OCI-LY7 (cell line): ENCODE measurements at regions of chr12 and their contacts with region 1.

Region 1: GRCh38 chr12:50924439-50925341 is 27.7 kb upstream of the HIGD1C start:
- DNase-seq: peak; percentile 96
- H3K4me3 ChIP-seq: peak overlapping the region; percentile 82
- H3K27ac ChIP-seq: peak overlapping the region; percentile 99
- H3K4me1 ChIP-seq: peaks cover 65% of the 10 kb centered on the region
- CTCF ChIP-seq: no peak

Region 2: DNA sequence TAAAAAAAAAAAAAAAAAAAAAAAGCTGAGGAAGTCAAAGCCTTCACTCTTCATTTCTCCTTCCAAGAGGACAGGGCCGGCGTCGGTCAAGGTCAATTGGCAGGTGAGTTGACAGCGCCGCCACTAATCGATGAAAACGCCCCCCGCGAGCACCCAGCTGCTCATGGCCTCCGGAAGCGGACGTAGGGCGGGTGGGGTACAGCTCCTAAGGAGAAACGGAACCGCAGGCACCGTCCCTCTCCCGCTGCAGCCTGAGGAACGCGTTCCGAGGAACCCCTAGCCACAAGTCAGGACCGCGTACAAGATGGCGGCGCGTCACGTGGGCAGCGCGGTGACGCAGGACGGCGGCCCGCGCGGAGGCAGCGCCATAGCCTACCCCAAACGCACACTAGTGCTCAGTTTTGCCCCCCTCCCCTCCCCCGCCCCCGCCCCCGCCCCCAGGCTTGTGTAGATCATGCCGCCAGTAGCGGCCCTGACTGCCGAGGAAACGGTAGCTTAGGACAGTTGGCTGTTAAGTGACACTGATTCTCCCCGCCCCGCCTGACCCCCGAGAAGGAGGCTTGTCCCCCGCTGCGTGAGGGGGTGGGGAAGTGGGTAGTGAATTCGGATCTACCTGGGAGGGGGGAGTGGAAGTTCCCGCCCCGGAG is 160.9 kb before region 1 on chr12 and contains the start of gene ATF1:
- CTCF ChIA-PET with region 1: no interaction called
- POLR2A ChIA-PET with region 1: interaction called, 6 read pairs
- intact Hi-C with region 1: loop called (anchors 2 kb)
- DNase-seq: peak; percentile 94
- H3K4me3 ChIP-seq: peak within 1 kb of the TSS; percentile 82
- H3K27ac ChIP-seq: peak within 1 kb of the TSS; percentile 84
- H3K4me1 ChIP-seq: peaks cover 32% of the 10 kb centered on the region
- CTCF ChIP-seq: no peak
- total RNA-seq, gene ATF1: 47.4 and 83.3 TPM in 2 replicates

Region 3: DNA sequence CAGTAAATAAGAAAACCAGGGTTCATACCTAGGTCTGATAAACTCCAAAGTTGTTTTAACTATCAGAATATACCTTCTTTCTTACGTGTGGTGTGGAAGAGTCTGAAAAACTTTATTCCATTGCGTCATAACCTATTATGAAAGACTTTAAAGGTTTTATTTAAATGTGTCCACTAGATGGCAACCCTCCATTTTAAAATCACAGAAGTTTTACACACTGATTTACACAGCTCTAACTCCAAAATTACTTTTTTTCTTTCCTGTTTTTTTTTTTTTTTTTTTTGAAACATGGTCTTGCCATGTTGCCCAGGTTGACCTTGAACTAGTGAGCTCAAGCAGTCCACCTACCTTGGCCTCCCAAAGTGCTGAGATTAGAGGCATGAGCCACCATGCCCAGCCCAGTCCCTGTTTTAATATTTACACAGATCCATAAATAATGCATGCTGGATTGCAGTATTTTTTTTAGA is 99.3 kb before region 1 on chr12:
- CTCF ChIA-PET with region 1: no interaction called
- POLR2A ChIA-PET with region 1: interaction called, 12 read pairs
- intact Hi-C with region 1: loop called (anchors 1 kb)
- DNase-seq: peak; percentile 76
- H3K4me3 ChIP-seq: no peak overlapping the region
- H3K27ac ChIP-seq: no peak overlapping the region
- H3K4me1 ChIP-seq: no peaks in the 10 kb centered on the region
- CTCF ChIP-seq: peak; percentile 77

Region 4: DNA sequence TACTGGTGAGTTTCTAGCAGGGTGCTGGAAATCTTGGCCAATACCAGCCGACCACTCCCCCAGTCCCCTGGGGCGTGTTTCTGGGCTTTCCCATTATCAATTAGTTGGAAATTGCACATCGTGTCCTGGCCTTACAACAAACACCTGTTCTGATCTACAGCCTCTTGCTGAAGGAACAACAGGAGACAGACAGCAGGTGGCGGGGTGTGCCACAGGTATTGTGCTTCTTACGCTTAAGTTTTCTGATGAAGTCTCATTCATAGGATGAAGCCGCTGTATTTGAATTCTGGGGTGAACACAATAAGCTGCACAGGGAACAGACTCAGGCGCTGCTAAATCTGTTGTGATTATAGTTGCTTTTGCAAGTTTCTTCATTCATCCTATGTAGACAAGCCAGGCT is 28.4 kb after region 1 on chr12:
- CTCF ChIA-PET with region 1: no interaction called
- POLR2A ChIA-PET with region 1: no interaction called
- intact Hi-C with region 1: no loop called
- DNase-seq: no peak
- H3K4me3 ChIP-seq: no peak overlapping the region
- H3K27ac ChIP-seq: no peak overlapping the region
- H3K4me1 ChIP-seq: peaks cover 4% of the 10 kb centered on the region
- CTCF ChIP-seq: 0 out of 2 replicates have a peak, but pooled peaks have one; percentile 24

Region 5: GRCh38 chr12:50986966-50987737 is 62.5 kb after region 1 on chr12:
- CTCF ChIA-PET with region 1: no interaction called
- POLR2A ChIA-PET with region 1: interaction called, 8 read pairs
- intact Hi-C with region 1: loop called (anchors 2 kb)
- DNase-seq: peak; percentile 72
- H3K4me3 ChIP-seq: no peak overlapping the region
- H3K27ac ChIP-seq: no peak overlapping the region
- H3K4me1 ChIP-seq: no peaks in the 10 kb centered on the region
- CTCF ChIP-seq: peak; percentile 89

Region 6: GRCh38 chr12:51025836-51026638 is 101.3 kb after region 1 on chr12 and contains the start of gene SLC11A2:
- CTCF ChIA-PET with region 1: no interaction called
- POLR2A ChIA-PET with region 1: interaction called, 3 read pairs
- intact Hi-C with region 1: loop called (anchors 2 kb)
- DNase-seq: peak; percentile 94
- H3K4me3 ChIP-seq: peak within 1 kb of the TSS; percentile 90
- H3K27ac ChIP-seq: peak within 1 kb of the TSS; percentile 33
- H3K4me1 ChIP-seq: peaks cover 40% of the 10 kb centered on the region
- CTCF ChIP-seq: no peak
- total RNA-seq, gene SLC11A2: 28.2 and 35.0 TPM in 2 replicates

Region 7: DNA sequence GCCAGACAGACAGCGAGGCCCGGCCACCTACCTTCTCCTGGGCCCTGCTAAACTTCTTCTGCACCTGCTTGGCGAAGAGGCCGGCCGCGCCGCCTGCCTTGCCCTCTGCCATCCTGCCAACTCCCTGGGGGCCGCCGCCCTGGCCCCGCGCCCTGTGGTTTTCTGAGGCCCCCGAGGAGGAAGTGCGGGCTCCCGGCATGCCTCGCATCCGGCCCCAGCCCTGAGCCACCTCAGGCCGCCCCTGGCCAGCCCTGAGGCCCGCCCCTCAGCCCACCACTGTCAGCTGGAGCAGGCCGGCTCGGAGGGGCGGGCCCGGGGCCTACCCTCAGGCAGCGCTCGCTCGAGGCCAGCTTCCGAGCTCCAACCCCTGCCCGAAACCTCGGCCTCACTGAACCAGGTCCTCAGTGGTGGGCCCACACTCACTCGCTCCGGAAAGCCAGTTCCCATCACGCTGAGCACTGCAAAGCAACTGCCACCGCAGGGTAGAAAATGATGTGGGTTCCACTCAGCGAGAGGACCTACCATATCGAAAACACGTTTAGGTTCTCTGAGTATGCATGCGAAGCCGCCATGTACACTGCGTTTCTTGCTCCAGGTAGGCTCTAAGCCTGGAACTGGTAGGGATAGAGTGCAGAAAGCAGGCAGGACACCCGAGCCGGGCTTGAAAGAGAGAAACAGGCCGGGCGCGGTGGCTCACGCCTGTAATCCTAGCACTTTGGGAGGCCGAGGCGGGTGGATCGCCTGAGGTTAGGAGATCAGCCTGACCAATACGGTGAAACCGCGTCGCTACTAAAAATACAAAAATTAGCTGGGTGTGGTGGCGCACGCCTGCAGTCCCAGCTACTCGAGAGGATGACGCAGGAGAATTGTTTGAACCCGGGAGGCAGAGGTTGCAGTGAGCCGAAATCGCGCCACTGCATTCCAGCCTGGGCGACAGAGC is 399.6 kb after region 1 on chr12 and contains the start of gene BIN2:
- CTCF ChIA-PET with region 1: no interaction called
- POLR2A ChIA-PET with region 1: interaction called, 4 read pairs
- intact Hi-C with region 1: loop called (anchors 5 kb)
- DNase-seq: peak; percentile 87
- H3K4me3 ChIP-seq: peak within 1 kb of the TSS; percentile 67
- H3K27ac ChIP-seq: peak within 1 kb of the TSS; percentile 24
- H3K4me1 ChIP-seq: peaks cover 80% of the 10 kb centered on the region
- CTCF ChIP-seq: no peak
- total RNA-seq, gene BIN2: 0.31 and 0.88 TPM in 2 replicates

Region 8: DNA sequence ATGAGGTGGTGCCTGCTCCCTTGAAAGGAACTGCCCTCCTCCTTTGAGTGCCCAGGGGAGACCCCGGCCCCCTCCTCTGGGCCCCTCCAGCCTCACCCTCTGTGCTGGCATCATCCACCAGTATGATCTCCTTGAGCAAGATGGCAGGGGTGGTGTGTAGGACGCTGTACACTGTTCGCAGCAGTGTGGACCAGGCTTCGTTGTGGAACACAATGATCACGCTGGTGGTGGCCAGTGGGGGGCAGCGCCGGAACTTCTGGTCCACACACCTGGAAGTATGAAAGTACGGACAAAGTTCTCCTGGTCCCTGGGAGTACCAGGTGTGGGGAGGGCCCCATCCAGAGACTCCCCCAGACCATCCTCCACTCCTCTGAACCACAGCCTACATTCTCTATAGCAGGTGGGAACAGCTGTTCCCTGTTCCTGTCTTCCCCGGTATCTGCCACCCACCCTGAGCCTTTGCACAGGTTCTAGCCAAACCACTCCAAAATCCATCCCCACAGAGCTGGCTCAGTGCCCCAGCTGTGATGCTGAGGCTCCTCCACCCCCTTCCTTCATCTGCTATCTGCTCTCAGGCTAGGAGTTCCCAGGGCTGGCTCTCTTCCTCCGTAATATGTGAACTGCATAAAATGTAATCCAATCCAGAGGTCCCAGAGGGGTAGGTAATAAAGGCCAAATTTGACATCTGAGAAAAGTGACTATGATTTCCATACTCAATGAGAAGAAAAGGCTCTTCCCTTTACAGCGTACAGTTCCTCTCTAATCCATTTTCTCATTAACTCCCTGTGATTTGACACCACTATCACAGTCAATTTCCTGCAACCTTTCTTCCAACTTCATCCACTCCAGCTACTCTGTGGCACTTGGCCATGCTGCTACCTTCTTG is 452.7 kb after region 1 on chr12:
- CTCF ChIA-PET with region 1: no interaction called
- POLR2A ChIA-PET with region 1: no interaction called
- intact Hi-C with region 1: no loop called
- DNase-seq: no peak
- H3K4me3 ChIP-seq: no peak overlapping the region
- H3K27ac ChIP-seq: no peak overlapping the region
- H3K4me1 ChIP-seq: no peaks in the 10 kb centered on the region
- CTCF ChIP-seq: no peak; the same call in 1 of the 2 replicates